Natural killer cell (primary cell): ENCODE measurements at regions of chr2 and their contacts with region 1.

Region 1: DNA sequence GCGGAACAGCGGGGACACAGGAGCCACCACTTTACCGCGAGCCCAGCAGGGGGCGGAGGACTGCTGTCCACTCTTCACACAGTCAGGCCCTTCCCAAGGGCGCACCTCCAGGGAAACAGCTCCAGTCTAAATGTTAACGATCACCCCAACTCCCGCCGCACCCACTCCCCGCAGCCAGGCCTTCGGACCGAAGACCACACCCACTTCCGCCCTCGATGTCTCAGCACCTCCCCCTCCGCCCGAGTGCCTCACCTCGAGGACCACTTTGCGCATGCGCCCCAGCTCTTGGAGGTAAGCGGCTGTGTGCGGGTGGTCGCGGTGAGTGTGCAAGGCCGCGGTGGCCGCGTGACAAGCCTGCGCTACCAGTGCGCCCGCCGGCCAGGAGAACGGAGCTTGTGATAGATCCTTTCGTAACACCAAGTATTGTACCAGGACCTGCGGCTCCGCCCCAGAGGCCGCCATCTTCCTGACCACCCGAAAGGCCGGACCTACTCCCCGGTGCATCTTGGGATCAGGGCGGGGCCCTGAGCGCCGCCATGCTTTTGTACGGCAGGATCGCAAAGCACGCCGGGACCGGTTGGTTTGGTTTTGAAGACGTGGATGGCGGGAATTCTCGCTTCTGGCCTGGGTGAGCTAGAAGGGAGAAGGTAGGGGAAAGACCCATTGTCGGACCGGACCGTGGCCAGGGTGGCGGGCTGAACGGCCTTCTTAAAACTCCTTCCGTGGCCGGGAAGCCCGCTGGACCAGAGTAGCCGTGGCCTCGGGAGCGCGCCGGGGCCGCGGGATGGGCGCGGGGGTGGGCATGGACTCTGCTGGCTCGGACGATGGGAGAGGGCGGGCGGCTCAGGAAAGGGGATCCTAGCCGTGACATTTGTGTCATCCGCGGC is at the starts of genes CENPO and PTRHD1:
- DNase-seq: peak; percentile 93 to 98
- ATAC-seq: peak; percentile 96 to 99 (median 97)
- H3K4me3 ChIP-seq: peak within 1 kb of the TSS; percentile 78
- H3K4me3 Mint-ChIP-seq: peak within 1 kb of the TSS; percentile 97
- H3K27ac ChIP-seq: peak within 1 kb of the TSS; percentile 91
- H3K27ac Mint-ChIP-seq: peak within 1 kb of the TSS; percentile 96 to 99
- H3K4me1 ChIP-seq: peaks cover 7% of the 10 kb centered on the region
- H3K4me1 Mint-ChIP-seq: peaks cover 31 to 41% of the 10 kb centered on the region in 2 donors
- H3K27me3 ChIP-seq: no peaks in the 10 kb centered on the region
- H3K27me3 Mint-ChIP-seq: no peaks in the 10 kb centered on the region
- CTCF ChIP-seq: peak; percentile 52
- total RNA-seq, gene CENPO: 8.1 to 15.1 (median 11.2) TPM
- total RNA-seq, gene PTRHD1: 12.7 to 22.9 (median 15.9) TPM

Region 2: GRCh38 chr2:24509425-24509824 is 283.7 kb before region 1 on chr2:
- intact Hi-C with region 1: no loop called
- DNase-seq: no peak
- ATAC-seq: peak; percentile 46 to 60 (median 60)
- H3K4me3 ChIP-seq: no peak overlapping the region
- H3K4me3 Mint-ChIP-seq: no peak overlapping the region
- H3K27ac ChIP-seq: no peak overlapping the region
- H3K27ac Mint-ChIP-seq: peak overlapping the region; percentile 59 to 60
- H3K4me1 ChIP-seq: no peaks in the 10 kb centered on the region
- H3K4me1 Mint-ChIP-seq: peaks cover 80 to 83% of the 10 kb centered on the region in 2 donors
- H3K27me3 ChIP-seq: no peaks in the 10 kb centered on the region
- H3K27me3 Mint-ChIP-seq: no peaks in the 10 kb centered on the region
- CTCF ChIP-seq: no peak

Region 3: DNA sequence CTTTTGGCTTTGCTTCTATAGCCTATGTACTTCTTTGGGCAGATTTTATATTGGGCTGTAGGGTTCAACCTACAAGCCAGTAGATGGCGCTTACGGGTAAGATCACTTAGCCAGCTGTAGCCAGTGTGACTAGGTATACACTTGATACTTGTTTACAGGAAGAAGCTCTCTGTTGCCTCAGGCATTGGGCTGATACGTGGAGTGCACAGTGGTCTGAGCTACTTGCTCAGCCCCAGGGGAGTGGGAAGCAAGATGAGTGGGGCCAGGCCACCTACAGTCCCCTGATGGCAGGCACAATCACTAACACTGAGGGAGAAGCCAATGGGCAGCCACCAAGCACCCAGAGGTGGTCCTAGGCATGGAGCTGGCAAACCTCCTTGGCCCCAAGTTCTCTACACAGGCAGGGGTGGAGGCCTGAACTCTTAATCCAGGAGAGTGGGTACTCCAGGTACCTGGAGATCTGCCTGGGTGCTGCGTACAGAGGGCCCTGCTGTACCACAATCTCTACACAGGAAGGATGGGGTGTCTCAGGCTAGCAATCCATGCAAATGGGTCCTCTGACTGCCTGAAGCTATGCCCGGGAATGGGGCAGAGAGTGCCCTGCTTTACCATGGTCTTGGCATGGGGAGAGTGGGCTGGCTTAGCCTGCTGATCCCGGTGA is 179.8 kb before region 1 on chr2:
- intact Hi-C with region 1: loop called (anchors 2 kb)
- DNase-seq: peak; percentile 51 to 67
- ATAC-seq: peak; percentile 95 to 97 (median 97)
- H3K4me3 ChIP-seq: no peak overlapping the region
- H3K4me3 Mint-ChIP-seq: peak overlapping the region; percentile 61
- H3K27ac ChIP-seq: peak overlapping the region; percentile 62
- H3K27ac Mint-ChIP-seq: peak overlapping the region; percentile 89 to 98
- H3K4me1 ChIP-seq: peaks cover 8% of the 10 kb centered on the region
- H3K4me1 Mint-ChIP-seq: peaks cover 45 to 55% of the 10 kb centered on the region in 2 donors
- H3K27me3 ChIP-seq: no peaks in the 10 kb centered on the region
- H3K27me3 Mint-ChIP-seq: no peaks in the 10 kb centered on the region
- CTCF ChIP-seq: peak; percentile 75

Region 4: GRCh38 chr2:24739354-24740025 is 53.6 kb before region 1 on chr2:
- intact Hi-C with region 1: loop called (anchors 2 kb)
- DNase-seq: peak in 1 of 2 donors; percentile 60
- ATAC-seq: peak; percentile 85 to 91 (median 89)
- H3K4me3 ChIP-seq: no peak overlapping the region
- H3K4me3 Mint-ChIP-seq: peak overlapping the region; percentile 69
- H3K27ac ChIP-seq: peak overlapping the region; percentile 86
- H3K27ac Mint-ChIP-seq: peak overlapping the region; percentile 88 to 98
- H3K4me1 ChIP-seq: peaks cover 7% of the 10 kb centered on the region
- H3K4me1 Mint-ChIP-seq: peaks cover 43 to 47% of the 10 kb centered on the region in 2 donors
- H3K27me3 ChIP-seq: no peaks in the 10 kb centered on the region
- H3K27me3 Mint-ChIP-seq: no peaks in the 10 kb centered on the region
- CTCF ChIP-seq: no peak

Region 5: GRCh38 chr2:24749069-24749691 is 43.9 kb before region 1 on chr2:
- intact Hi-C with region 1: loop called (anchors 2 kb)
- DNase-seq: no peak
- ATAC-seq: no peak
- H3K4me3 ChIP-seq: no peak overlapping the region
- H3K4me3 Mint-ChIP-seq: no peak overlapping the region
- H3K27ac ChIP-seq: no peak overlapping the region
- H3K27ac Mint-ChIP-seq: peak overlapping the region; percentile 43 to 47
- H3K4me1 ChIP-seq: peaks cover 24% of the 10 kb centered on the region
- H3K4me1 Mint-ChIP-seq: peaks cover 37 to 40% of the 10 kb centered on the region in 2 donors
- H3K27me3 ChIP-seq: no peaks in the 10 kb centered on the region
- H3K27me3 Mint-ChIP-seq: no peaks in the 10 kb centered on the region
- CTCF ChIP-seq: no peak

Region 6: DNA sequence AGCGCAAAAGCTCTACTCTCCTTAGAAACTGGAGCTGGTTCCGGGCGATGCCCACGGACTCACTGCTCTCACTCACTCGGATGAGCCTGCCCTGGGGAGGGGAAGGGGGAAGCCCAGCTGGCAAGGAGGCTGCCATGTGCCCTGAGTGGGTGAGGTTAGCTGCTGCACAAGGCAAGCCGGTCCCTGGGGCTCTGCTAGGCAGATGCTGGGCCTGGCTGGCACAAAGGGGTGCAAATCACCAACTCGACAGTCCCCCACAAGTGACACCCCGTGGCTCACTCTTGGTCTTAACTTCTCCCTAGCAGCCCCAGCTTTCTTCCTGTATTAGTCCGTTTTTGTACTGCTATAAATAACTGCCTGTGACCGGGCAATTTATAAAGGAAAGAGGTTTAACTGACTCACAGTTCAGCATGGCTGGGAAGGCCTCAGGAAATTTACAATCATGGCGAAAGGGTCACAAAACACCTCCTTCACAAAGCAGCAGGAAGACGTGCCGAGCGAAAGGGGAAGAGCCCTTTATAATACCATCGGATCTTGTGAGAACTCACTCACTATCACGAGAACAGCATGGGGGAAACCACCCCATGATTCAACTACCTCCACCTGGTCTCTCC is 93.7 kb after region 1 on chr2:
- intact Hi-C with region 1: no loop called
- DNase-seq: no peak
- ATAC-seq: peak in 1 of 3 donors; percentile 25
- H3K4me3 ChIP-seq: peak overlapping the region; percentile 13
- H3K4me3 Mint-ChIP-seq: no peak overlapping the region
- H3K27ac ChIP-seq: no peak overlapping the region
- H3K27ac Mint-ChIP-seq: peak overlapping the region in 1 of 2 donors; percentile 49
- H3K4me1 ChIP-seq: no peaks in the 10 kb centered on the region
- H3K4me1 Mint-ChIP-seq: peaks cover 0 to 7% of the 10 kb centered on the region in 2 donors
- H3K27me3 ChIP-seq: no peaks in the 10 kb centered on the region
- H3K27me3 Mint-ChIP-seq: peaks cover 0 to 4% of the 10 kb centered on the region in 2 donors
- CTCF ChIP-seq: no peak

Region 7: GRCh38 chr2:24971536-24972314 is 178.6 kb after region 1 on chr2 and contains the start of gene DNAJC27:
- intact Hi-C with region 1: loop called (anchors 10 kb)
- DNase-seq: peak; percentile 98 to 99
- ATAC-seq: peak; percentile 86 to 96 (median 87)
- H3K4me3 ChIP-seq: peak within 1 kb of the TSS; percentile 96
- H3K4me3 Mint-ChIP-seq: peak within 1 kb of the TSS; percentile 98
- H3K27ac ChIP-seq: peak within 1 kb of the TSS; percentile 96
- H3K27ac Mint-ChIP-seq: peak within 1 kb of the TSS; percentile 100
- H3K4me1 ChIP-seq: peaks cover 13% of the 10 kb centered on the region
- H3K4me1 Mint-ChIP-seq: peaks cover 20 to 24% of the 10 kb centered on the region in 2 donors
- H3K27me3 ChIP-seq: no peaks in the 10 kb centered on the region
- H3K27me3 Mint-ChIP-seq: no peaks in the 10 kb centered on the region
- CTCF ChIP-seq: no peak
- total RNA-seq, gene DNAJC27: 14.1 to 19.7 (median 16.6) TPM

Region 8: GRCh38 chr2:25009954-25010353 is 216.8 kb after region 1 on chr2:
- intact Hi-C with region 1: no loop called
- DNase-seq: no peak
- ATAC-seq: no peak
- H3K4me3 ChIP-seq: no peak overlapping the region
- H3K4me3 Mint-ChIP-seq: no peak overlapping the region
- H3K27ac ChIP-seq: no peak overlapping the region
- H3K27ac Mint-ChIP-seq: no peak overlapping the region
- H3K4me1 ChIP-seq: no peaks in the 10 kb centered on the region
- H3K4me1 Mint-ChIP-seq: no peaks in the 10 kb centered on the region
- H3K27me3 ChIP-seq: no peaks in the 10 kb centered on the region
- H3K27me3 Mint-ChIP-seq: no peaks in the 10 kb centered on the region
- CTCF ChIP-seq: no peak

Region 9: GRCh38 chr2:25168256-25169072 is 375.3 kb after region 1 on chr2 and contains the start of gene POMC:
- intact Hi-C with region 1: no loop called
- DNase-seq: peak; percentile 34 to 53
- ATAC-seq: peak; percentile 69 to 87 (median 74)
- H3K4me3 ChIP-seq: peak within 1 kb of the TSS; percentile 17
- H3K4me3 Mint-ChIP-seq: peak within 1 kb of the TSS; percentile 68
- H3K27ac ChIP-seq: no peak within 1 kb of the TSS
- H3K27ac Mint-ChIP-seq: peak within 1 kb of the TSS in 1 of 2 donors; percentile 20
- H3K4me1 ChIP-seq: peaks cover 19% of the 10 kb centered on the region
- H3K4me1 Mint-ChIP-seq: peaks cover 0 to 12% of the 10 kb centered on the region in 2 donors
- H3K27me3 ChIP-seq: peaks cover 31% of the 10 kb centered on the region
- H3K27me3 Mint-ChIP-seq: peaks cover 64 to 65% of the 10 kb centered on the region in 2 donors
- CTCF ChIP-seq: no peak
- total RNA-seq, gene POMC: 4.9 to 6.6 (median 6.0) TPM